B cell (primary cell): ENCODE measurements at regions of chr21 and their contacts with region 1.

Region 1: GRCh38 chr21:37028570-37028969 is 22.1 kb downstream of the RIPPLY3 start:
- DNase-seq: no peak
- ATAC-seq: no peak
- H3K4me3 ChIP-seq: no peak overlapping the region
- H3K4me3 Mint-ChIP-seq: no peak overlapping the region
- H3K27ac ChIP-seq: no peak overlapping the region
- H3K27ac Mint-ChIP-seq: no peak overlapping the region
- H3K4me1 ChIP-seq: no peaks in the 10 kb centered on the region
- H3K4me1 Mint-ChIP-seq: no peaks in the 10 kb centered on the region
- H3K27me3 ChIP-seq: no peaks in the 10 kb centered on the region
- H3K27me3 Mint-ChIP-seq: peaks cover 11% of the 10 kb centered on the region
- CTCF ChIP-seq: no peak

Region 2: GRCh38 chr21:37659874-37660273 is 631.3 kb after region 1 on chr21:
- CTCF ChIA-PET with region 1: no interaction called
- POLR2A ChIA-PET with region 1: no interaction called
- intact Hi-C with region 1: loop called (anchors 5 kb)
- DNase-seq: no peak
- ATAC-seq: no peak
- H3K4me3 ChIP-seq: no peak overlapping the region
- H3K4me3 Mint-ChIP-seq: no peak overlapping the region
- H3K27ac ChIP-seq: no peak overlapping the region
- H3K27ac Mint-ChIP-seq: no peak overlapping the region
- H3K4me1 ChIP-seq: no peaks in the 10 kb centered on the region
- H3K4me1 Mint-ChIP-seq: no peaks in the 10 kb centered on the region
- H3K27me3 ChIP-seq: no peaks in the 10 kb centered on the region
- H3K27me3 Mint-ChIP-seq: peaks cover 7% of the 10 kb centered on the region
- CTCF ChIP-seq: no peak